ENCODE measurements at regions of chr1 and their contacts with region 1.

Region 1: GRCh38 chr1:202009326-202010179 is 834 bp upstream of the ELF3 start:
- DNase-seq: peak; percentile 48
- ATAC-seq: peak; percentile 83

Region 2: GRCh38 chr1:202117865-202118371 is 108.4 kb after region 1 on chr1:
- intact Hi-C with region 1: loop called (anchors 2 kb)
- DNase-seq: no peak
- ATAC-seq: peak; percentile 59